PC-3 (cell line): ENCODE measurements at regions of chr4 and their contacts with region 1.

Region 1: DNA sequence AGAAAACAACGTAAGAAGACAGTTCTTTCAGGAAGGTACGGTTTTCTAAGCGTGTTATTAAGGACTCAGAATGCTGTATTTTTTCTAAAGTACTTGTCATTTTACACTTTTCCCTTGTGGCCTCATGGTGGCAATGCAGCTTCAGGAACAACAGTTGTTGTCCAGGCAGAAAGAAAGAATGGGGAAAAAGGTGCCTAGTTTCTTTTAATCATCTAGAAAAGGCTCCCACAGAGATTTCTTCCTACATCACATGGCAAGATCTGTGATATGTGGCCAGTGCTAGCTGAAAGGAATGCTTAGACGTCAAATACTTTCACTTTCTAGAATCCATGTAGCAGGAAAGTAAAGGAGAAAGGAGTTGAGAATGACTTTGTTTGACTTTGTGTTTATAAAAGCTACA is 49.0 kb upstream of the TRAM1L1 start:
- DNase-seq: peak; percentile 69
- ATAC-seq: peak; percentile 74
- H3K4me3 ChIP-seq: peak overlapping the region; percentile 47
- H3K27ac ChIP-seq: no peak overlapping the region
- H3K4me1 ChIP-seq: peaks cover 10% of the 10 kb centered on the region; the same call in 1 of the 2 replicates
- H3K27me3 ChIP-seq: no peaks in the 10 kb centered on the region
- CTCF ChIP-seq: peak; percentile 79

Region 2: DNA sequence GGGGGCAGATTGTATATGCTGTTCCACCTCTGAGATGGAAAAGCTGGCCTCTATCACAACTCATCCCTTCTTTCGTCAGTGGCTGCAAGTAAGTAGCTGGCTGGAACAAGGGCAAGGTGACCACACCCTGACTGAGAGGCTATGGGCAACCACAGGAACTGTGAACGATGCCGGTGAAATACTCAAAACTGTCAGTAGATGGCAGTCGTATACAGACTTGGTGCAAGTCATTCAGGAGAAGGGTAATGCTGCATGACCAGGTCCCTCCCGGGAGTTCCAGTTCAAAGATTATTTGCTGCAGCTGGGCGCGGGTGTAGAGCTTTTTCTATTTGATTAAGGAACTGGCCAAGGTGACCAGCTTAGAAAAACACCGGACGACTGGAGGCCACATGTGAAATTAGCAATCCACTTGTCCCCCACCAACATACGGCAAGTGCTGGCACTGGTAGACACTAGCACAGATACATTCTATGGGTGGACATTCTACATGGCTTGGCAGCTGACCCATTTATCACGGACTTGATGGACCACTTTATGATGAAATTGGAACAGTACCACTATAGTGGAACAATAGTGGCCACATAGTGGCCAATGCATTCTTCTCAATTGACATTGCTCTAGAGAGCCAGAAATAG is 775.7 kb before region 1 on chr4:
- CTCF ChIA-PET with region 1: interaction called, 4 read pairs
- POLR2A ChIA-PET with region 1: no interaction called
- intact Hi-C with region 1: loop called (anchors 2 kb)
- DNase-seq: peak; percentile 94
- ATAC-seq: peak; percentile 94
- H3K4me3 ChIP-seq: no peak overlapping the region
- H3K27ac ChIP-seq: no peak overlapping the region
- H3K4me1 ChIP-seq: no peaks in the 10 kb centered on the region
- H3K27me3 ChIP-seq: no peaks in the 10 kb centered on the region
- CTCF ChIP-seq: peak; percentile 66

Region 3: DNA sequence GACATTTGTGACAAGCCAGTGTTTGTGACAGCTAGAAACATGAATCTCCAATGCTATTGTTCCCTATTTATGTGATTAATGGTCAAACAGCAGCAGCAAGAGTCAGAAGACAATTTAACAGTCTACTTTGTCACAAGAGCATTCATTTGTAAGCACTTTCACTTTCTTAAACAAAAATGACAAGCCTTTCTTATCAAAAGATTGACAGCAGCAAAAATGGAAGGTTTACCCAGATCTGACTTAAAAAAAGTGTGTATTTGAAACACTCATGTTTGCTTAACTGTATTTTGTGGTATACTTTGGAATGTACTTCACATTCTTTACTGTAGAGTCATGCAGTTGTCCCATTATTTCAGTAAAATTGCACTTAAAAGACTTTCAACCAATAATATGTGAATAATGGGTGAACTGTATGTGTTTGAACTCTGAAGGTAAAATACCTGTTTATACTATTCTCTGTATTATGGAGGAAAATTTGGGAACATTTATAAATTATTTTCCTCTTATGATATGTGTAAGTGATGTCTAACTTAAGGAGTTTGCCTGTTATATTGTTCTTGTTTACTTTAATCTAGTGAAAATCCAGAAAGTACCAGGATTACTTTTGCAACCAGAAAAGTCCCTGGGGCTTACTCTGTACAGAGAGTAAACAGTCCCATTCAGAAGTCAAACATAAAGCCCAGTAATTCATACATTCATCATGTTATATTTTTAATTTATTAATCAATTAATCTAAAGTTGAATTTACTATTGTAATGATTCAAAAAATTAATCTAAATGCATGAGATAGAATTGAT is 265.9 kb after region 1 on chr4:
- CTCF ChIA-PET with region 1: no interaction called
- POLR2A ChIA-PET with region 1: no interaction called
- intact Hi-C with region 1: loop called (anchors 10 kb)
- DNase-seq: peak; percentile 81
- ATAC-seq: peak; percentile 97
- H3K4me3 ChIP-seq: peak overlapping the region; percentile 59
- H3K27ac ChIP-seq: peak overlapping the region; percentile 72
- H3K4me1 ChIP-seq: peaks cover 28% of the 10 kb centered on the region
- H3K27me3 ChIP-seq: no peaks in the 10 kb centered on the region
- CTCF ChIP-seq: no peak

Region 4: DNA sequence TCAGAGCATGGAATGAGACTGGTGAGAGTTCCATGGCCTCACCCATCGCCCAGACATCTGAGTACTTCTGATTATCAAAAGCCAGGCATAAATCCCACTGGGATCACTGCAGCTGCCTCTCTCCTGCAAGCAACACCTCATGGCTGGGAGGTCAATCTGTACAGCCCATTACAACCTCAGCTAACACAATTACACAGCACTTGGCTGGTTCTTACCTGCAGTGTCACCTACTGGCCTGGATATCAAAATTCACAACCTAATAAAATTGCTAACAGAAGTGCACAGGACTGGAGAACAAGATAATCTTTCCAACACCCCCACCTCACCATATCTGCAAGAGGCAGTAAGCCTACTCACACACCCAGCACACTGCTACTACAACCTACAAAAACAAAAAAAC is 558.2 kb after region 1 on chr4:
- CTCF ChIA-PET with region 1: no interaction called
- POLR2A ChIA-PET with region 1: no interaction called
- intact Hi-C with region 1: loop called (anchors 10 kb)
- DNase-seq: peak; percentile 3
- ATAC-seq: no peak; the same call in 1 of the 2 replicates
- H3K4me3 ChIP-seq: no peak overlapping the region
- H3K27ac ChIP-seq: no peak overlapping the region
- H3K4me1 ChIP-seq: no peaks in the 10 kb centered on the region
- H3K27me3 ChIP-seq: no peaks in the 10 kb centered on the region
- CTCF ChIP-seq: no peak

Region 5: GRCh38 chr4:118034053-118034785 is 899.8 kb after region 1 on chr4 and contains the start of gene NDST3:
- CTCF ChIA-PET with region 1: interaction called, 3 read pairs
- POLR2A ChIA-PET with region 1: no interaction called
- intact Hi-C with region 1: loop called (anchors 1 kb)
- DNase-seq: peak; percentile 66
- ATAC-seq: peak; percentile 73
- H3K4me3 ChIP-seq: peak within 1 kb of the TSS; percentile 68
- H3K27ac ChIP-seq: no peak within 1 kb of the TSS
- H3K4me1 ChIP-seq: peaks cover 8% of the 10 kb centered on the region; the same call in 1 of the 2 replicates
- H3K27me3 ChIP-seq: no peaks in the 10 kb centered on the region
- CTCF ChIP-seq: peak; percentile 67
- total RNA-seq, gene NDST3: 0.04 and 0.17 TPM in 2 replicates

Region 6: GRCh38 chr4:118278473-118279274 is 1144.3 kb after region 1 on chr4:
- CTCF ChIA-PET with region 1: no interaction called
- POLR2A ChIA-PET with region 1: no interaction called
- intact Hi-C with region 1: loop called (anchors 10 kb)
- DNase-seq: peak; percentile 92
- ATAC-seq: peak; percentile 85
- H3K4me3 ChIP-seq: peak overlapping the region; percentile 100
- H3K27ac ChIP-seq: peak overlapping the region; percentile 77
- H3K4me1 ChIP-seq: peaks cover 15% of the 10 kb centered on the region
- H3K27me3 ChIP-seq: no peaks in the 10 kb centered on the region
- CTCF ChIP-seq: no peak